ENCODE measurements at regions of chr1 and their contacts with region 1.

Region 1: DNA sequence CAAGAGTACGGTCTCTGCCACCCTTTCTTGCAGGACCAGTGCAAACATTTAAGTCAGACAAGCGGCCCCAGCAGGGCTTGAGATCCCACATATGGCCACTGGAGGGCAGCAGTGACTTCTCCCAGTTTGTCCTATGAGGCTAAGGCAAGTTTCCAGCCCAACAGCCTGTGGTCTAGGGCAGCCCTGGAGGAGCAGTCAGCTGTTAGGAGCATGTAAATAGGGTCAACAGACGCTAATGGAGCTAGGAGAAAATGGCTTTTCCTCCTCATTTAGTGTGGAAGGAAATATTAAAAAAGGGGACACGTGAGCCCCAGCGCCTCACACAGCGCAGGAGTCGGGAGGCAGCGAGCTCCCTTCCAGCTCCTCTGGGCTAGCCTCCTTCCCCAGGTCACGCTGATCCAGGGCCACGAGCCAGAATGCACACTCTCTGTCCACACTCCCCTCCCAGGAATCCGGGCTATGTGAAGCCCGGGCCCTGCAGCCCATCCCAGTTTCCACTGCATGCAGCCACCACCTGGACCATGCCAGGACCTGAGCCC is 95.6 kb downstream of the LAMC2 start:
- DNase-seq: peak; percentile 86
- H3K4me3 Mint-ChIP-seq: no peak overlapping the region
- H3K27ac Mint-ChIP-seq: no peak overlapping the region
- H3K4me1 Mint-ChIP-seq: no peaks in the 10 kb centered on the region
- H3K27me3 Mint-ChIP-seq: peaks cover 5% of the 10 kb centered on the region

Region 2: GRCh38 chr1:183105449-183105848 is 176.2 kb before region 1 on chr1:
- CTCF ChIA-PET with region 1: no interaction called
- POLR2A ChIA-PET with region 1: no interaction called
- intact Hi-C with region 1: no loop called
- DNase-seq: no peak
- H3K4me3 Mint-ChIP-seq: no peak overlapping the region
- H3K27ac Mint-ChIP-seq: no peak overlapping the region
- H3K4me1 Mint-ChIP-seq: no peaks in the 10 kb centered on the region
- H3K27me3 Mint-ChIP-seq: peaks cover 15% of the 10 kb centered on the region

Region 3: DNA sequence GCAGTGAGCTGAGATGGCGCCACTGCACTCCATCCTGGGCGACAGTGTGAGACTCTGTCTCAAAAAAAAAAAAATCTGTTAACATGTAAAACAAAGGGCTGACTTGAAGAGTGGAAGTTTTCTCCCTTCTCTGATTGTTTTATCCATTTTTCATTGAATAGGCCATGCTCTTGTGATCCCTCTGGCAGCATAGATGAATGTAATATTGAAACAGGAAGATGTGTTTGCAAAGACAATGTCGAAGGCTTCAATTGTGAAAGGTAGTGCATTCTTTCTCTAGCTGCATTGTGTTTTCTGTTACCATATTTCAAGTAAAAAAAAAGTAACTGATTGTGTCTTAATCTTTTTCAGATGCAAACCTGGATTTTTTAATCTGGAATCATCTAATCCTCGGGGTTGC is 165.2 kb before region 1 on chr1:
- CTCF ChIA-PET with region 1: no interaction called
- POLR2A ChIA-PET with region 1: no interaction called
- intact Hi-C with region 1: no loop called
- DNase-seq: no peak
- H3K4me3 Mint-ChIP-seq: no peak overlapping the region
- H3K27ac Mint-ChIP-seq: no peak overlapping the region
- H3K4me1 Mint-ChIP-seq: no peaks in the 10 kb centered on the region
- H3K27me3 Mint-ChIP-seq: no peaks in the 10 kb centered on the region

Region 4: DNA sequence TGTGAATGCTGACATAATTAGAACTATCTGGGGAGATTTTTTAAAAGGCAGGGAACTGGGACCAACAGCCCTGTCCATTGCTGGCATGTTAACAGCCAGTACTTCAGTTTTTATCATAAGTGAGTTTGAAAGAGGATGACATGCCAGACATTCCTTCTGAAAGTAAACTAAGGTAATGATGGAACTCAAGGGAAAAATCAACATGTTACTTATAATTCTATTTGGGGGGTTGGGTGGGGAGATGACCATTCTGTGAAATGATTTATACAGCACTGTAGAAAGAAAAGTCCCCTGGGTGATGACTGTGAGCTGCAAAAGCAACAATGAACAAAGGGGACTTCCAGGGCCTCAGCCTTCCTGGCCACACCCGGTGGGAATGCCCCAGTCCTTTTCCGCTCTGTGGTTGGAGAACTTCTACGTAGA is 101.0 kb before region 1 on chr1:
- CTCF ChIA-PET with region 1: no interaction called
- POLR2A ChIA-PET with region 1: no interaction called
- intact Hi-C with region 1: no loop called
- DNase-seq: peak; percentile 43
- H3K4me3 Mint-ChIP-seq: no peak overlapping the region
- H3K27ac Mint-ChIP-seq: no peak overlapping the region
- H3K4me1 Mint-ChIP-seq: peaks cover 9% of the 10 kb centered on the region
- H3K27me3 Mint-ChIP-seq: peaks cover 4% of the 10 kb centered on the region

Region 5: GRCh38 chr1:183227963-183228649 is 53.5 kb before region 1 on chr1:
- CTCF ChIA-PET with region 1: no interaction called
- POLR2A ChIA-PET with region 1: no interaction called
- intact Hi-C with region 1: no loop called
- DNase-seq: peak; percentile 56
- H3K4me3 Mint-ChIP-seq: no peak overlapping the region
- H3K27ac Mint-ChIP-seq: no peak overlapping the region
- H3K4me1 Mint-ChIP-seq: peaks cover 6% of the 10 kb centered on the region
- H3K27me3 Mint-ChIP-seq: no peaks in the 10 kb centered on the region

Region 6: GRCh38 chr1:183543619-183544204 is 262.1 kb after region 1 on chr1:
- CTCF ChIA-PET with region 1: interaction called, 5 read pairs
- POLR2A ChIA-PET with region 1: no interaction called
- intact Hi-C with region 1: loop called (anchors 1 kb)
- DNase-seq: no peak
- H3K4me3 Mint-ChIP-seq: no peak overlapping the region
- H3K27ac Mint-ChIP-seq: peak overlapping the region; percentile 1
- H3K4me1 Mint-ChIP-seq: peaks cover 2% of the 10 kb centered on the region
- H3K27me3 Mint-ChIP-seq: no peaks in the 10 kb centered on the region

Region 7: DNA sequence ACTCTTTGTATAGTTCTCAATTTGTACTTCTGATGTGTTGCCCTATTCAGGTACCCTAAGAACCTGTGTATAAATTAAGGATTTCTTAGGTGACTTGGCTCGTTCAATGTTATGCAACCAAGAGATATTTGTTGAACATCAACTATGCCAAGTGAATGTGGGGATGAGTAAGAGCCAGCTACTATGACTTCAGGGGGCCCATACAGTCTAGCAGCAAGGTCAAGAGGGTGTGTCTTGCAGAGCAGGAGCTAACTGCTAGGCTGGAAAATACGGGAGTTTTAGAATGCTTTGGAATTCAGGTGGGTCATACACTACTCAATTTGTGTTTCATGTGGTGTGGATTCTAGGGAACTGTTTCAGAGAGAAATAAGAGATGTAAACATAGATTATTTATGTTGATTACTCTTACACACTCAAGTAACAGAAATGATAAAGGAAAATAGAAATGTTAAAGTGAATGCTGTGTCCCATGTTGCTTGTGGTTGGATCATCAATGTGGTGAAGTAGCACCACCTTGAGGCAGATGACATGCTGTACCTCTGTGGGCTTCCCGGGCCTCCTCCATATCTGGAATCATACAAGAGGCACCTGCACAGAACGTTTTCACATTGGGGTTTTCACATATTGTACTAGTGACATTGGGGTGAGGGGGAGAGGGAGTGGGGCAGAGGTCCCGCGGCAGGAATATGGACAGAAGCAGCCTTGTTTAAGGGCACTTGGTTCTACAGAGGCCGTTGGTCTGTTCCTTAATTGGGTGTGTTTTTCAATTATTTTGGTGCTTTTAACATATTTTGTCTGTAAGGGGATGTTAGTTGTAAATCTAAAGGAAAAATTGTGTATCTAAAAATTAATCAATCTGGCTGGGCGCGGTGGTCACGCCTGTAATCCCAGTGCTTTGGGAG is 341.5 kb after region 1 on chr1:
- CTCF ChIA-PET with region 1: interaction called, 4 read pairs
- POLR2A ChIA-PET with region 1: no interaction called
- intact Hi-C with region 1: loop called (anchors 1 kb)
- DNase-seq: peak; percentile 63
- H3K4me3 Mint-ChIP-seq: no peak overlapping the region
- H3K27ac Mint-ChIP-seq: no peak overlapping the region
- H3K4me1 Mint-ChIP-seq: peaks cover 4% of the 10 kb centered on the region
- H3K27me3 Mint-ChIP-seq: no peaks in the 10 kb centered on the region

Region 8: DNA sequence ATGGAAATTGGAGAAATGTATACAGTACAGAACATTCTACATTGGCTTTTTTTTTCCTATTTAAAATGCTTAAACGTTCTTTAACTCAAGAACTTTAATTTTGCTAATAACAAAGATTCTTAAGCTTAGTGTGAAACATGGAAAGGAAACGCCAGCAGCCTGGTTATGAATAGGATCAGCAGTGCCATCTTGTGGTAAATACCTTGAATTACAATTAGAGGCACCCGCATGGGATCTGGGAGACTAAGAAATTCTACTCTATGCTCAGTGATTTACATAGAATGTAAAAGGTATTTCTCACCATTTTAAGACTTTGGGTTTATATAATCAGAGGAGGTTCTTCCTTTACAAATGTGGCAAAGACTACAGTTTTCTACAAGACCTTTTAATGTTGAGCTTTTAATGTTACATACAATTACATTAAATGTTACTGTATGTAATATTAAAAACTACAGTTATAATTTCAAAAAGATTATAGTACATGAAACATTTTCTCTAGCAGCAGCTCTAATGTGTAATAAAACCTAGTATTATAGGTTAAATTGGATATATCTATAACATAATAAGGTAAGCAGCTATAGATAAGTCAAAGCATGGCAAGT is 403.6 kb after region 1 on chr1:
- CTCF ChIA-PET with region 1: interaction called, 16 read pairs
- POLR2A ChIA-PET with region 1: no interaction called
- intact Hi-C with region 1: loop called (anchors 5 kb)
- DNase-seq: peak; percentile 23
- H3K4me3 Mint-ChIP-seq: no peak overlapping the region
- H3K27ac Mint-ChIP-seq: no peak overlapping the region
- H3K4me1 Mint-ChIP-seq: peaks cover 2% of the 10 kb centered on the region
- H3K27me3 Mint-ChIP-seq: peaks cover 3% of the 10 kb centered on the region